Activated CD4-positive, alpha-beta T cell treated with anti-CD3 and anti-CD28 coated beads for 36 hours (primary cell): ENCODE measurements at regions of chr3 and their contacts with region 1.

Region 1: DNA sequence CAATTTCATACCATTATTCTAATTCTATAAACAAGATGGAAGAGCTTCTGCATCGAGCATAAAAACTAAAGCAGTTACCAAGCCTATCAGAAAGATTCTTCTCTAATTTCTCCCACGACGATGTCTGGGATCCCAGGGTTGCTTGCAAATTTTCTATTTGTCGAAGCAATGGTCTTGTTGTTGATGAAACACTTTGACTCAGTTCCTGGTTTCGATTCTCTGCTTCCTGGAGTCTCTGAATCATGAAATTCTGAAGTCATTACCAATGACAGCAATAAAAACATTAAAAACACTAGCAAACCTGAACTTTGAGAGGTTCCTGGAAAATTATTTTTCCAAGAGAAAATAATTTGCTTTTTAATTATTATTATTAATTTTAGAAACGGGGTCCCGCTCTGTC is 18.7 kb downstream of the TMF1 start:
- DNase-seq: peak; percentile 28
- ATAC-seq: peak; percentile 80
- H3K4me3 Mint-ChIP-seq: no peak overlapping the region
- H3K27ac Mint-ChIP-seq: no peak overlapping the region
- H3K4me1 Mint-ChIP-seq: peaks cover 15% of the 10 kb centered on the region
- H3K27me3 Mint-ChIP-seq: no peaks in the 10 kb centered on the region

Region 2: GRCh38 chr3:69020424-69020823 is 13.0 kb before region 1 on chr3:
- CTCF ChIA-PET with region 1: no interaction called
- POLR2A ChIA-PET with region 1: no interaction called
- intact Hi-C with region 1: no loop called
- DNase-seq: no peak
- ATAC-seq: no peak
- H3K4me3 Mint-ChIP-seq: no peak overlapping the region
- H3K27ac Mint-ChIP-seq: no peak overlapping the region
- H3K4me1 Mint-ChIP-seq: peaks cover 5% of the 10 kb centered on the region
- H3K27me3 Mint-ChIP-seq: no peaks in the 10 kb centered on the region

Region 3: DNA sequence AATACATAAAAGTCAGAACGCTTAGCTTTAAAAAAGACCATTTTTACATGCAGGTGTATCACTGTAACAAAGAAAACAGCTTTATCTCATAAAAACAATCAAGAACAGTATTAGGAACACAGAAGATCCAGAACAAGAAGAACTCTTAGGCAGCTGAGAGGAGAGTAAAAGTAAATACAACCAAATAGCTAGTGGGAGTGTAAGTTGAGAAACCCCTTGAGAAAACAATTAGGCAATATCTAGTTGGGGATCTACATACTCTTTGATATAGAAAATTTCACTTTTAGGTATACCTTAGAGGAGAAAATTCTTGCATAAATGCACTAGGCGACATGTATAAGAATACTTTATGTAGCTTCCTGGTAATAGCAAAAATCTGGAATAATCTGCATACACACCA is 11.1 kb after region 1 on chr3:
- CTCF ChIA-PET with region 1: interaction called, 3 read pairs
- POLR2A ChIA-PET with region 1: no interaction called
- intact Hi-C with region 1: loop called in 1 of 2 experiments (anchors 1 kb)
- DNase-seq: no peak
- ATAC-seq: no peak
- H3K4me3 Mint-ChIP-seq: no peak overlapping the region
- H3K27ac Mint-ChIP-seq: no peak overlapping the region
- H3K4me1 Mint-ChIP-seq: peaks cover 34% of the 10 kb centered on the region
- H3K27me3 Mint-ChIP-seq: no peaks in the 10 kb centered on the region